ENCODE measurements at regions of chr5 and their contacts with region 1.

Region 1: GRCh38 chr5:171961117-171961516 is 45.3 kb downstream of the FBXW11 start:
- DNase-seq: peak; percentile 65
- H3K4me3 Mint-ChIP-seq: no peak overlapping the region
- H3K27ac Mint-ChIP-seq: peak overlapping the region; percentile 57
- H3K4me1 Mint-ChIP-seq: peaks cover 89% of the 10 kb centered on the region
- H3K27me3 Mint-ChIP-seq: no peaks in the 10 kb centered on the region

Region 2: GRCh38 chr5:171913987-171914273 is 47.2 kb before region 1 on chr5:
- CTCF ChIA-PET with region 1: interaction called, 36 read pairs
- intact Hi-C with region 1: no loop called
- DNase-seq: no peak
- H3K4me3 Mint-ChIP-seq: no peak overlapping the region
- H3K27ac Mint-ChIP-seq: no peak overlapping the region
- H3K4me1 Mint-ChIP-seq: peaks cover 57% of the 10 kb centered on the region
- H3K27me3 Mint-ChIP-seq: no peaks in the 10 kb centered on the region

Region 3: GRCh38 chr5:171984748-171985419 is 23.8 kb after region 1 on chr5:
- CTCF ChIA-PET with region 1: interaction called, 5 read pairs
- intact Hi-C with region 1: loop called (anchors 1 kb)
- DNase-seq: peak; percentile 63
- H3K4me3 Mint-ChIP-seq: no peak overlapping the region
- H3K27ac Mint-ChIP-seq: peak overlapping the region; percentile 50
- H3K4me1 Mint-ChIP-seq: peaks cover 55% of the 10 kb centered on the region
- H3K27me3 Mint-ChIP-seq: no peaks in the 10 kb centered on the region

Region 4: GRCh38 chr5:172065501-172065990 is 104.4 kb after region 1 on chr5:
- CTCF ChIA-PET with region 1: no interaction called
- intact Hi-C with region 1: loop called (anchors 1 kb)
- DNase-seq: no peak
- H3K4me3 Mint-ChIP-seq: no peak overlapping the region
- H3K27ac Mint-ChIP-seq: no peak overlapping the region
- H3K4me1 Mint-ChIP-seq: peaks cover 56% of the 10 kb centered on the region
- H3K27me3 Mint-ChIP-seq: no peaks in the 10 kb centered on the region

Region 5: DNA sequence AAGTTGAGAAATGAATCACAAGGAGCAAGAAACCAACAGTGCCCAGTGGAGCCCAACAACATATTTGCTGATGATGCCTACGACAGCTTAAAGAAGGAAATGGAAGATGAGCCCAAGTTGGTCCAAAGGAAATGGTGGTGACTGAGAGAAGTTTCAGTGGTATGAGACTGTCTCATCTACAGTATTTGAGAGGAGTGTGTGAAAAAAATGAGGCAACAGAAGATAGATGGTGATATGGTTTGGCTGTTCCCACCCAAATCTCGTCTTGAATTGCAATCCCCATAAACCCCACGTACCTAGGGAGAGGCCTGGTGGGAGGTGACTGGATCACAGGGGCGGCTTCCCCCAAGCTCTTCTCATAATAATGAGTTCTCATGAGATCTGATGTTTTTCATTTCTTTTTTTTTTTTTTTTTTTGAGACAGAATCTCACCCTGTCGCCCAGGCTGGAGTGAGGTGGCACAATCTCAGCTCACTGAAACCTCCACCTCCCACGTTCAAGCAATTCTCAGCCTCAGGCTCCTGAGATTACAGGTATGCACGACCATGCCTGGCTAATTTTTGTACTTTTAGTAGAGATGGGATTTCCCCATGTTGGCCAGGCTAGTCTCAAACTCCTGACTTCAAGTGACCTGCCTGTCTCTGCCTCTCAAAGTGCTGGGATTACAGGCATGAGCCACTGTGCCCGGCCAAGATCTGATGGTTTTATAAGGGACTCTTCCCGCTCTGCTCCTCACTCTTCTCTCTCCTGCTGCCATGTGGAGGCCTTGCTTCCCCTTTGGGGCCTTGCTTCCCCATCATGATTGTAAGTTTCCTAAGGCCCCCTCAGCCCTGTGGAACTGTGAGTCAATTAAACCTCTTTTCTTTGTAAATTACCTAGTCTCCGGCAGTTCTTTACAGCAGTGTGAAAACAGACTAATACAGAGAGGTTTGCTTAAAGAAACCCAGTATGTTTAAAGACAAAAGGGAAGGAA is 263.1 kb after region 1 on chr5:
- CTCF ChIA-PET with region 1: no interaction called
- intact Hi-C with region 1: loop called (anchors 1 kb)
- DNase-seq: peak; percentile 70
- H3K4me3 Mint-ChIP-seq: peak overlapping the region; percentile 11
- H3K27ac Mint-ChIP-seq: peak overlapping the region; percentile 37
- H3K4me1 Mint-ChIP-seq: peaks cover 30% of the 10 kb centered on the region
- H3K27me3 Mint-ChIP-seq: no peaks in the 10 kb centered on the region

Region 6: GRCh38 chr5:173187054-173187789 is 1226.1 kb after region 1 on chr5:
- CTCF ChIA-PET with region 1: no interaction called
- intact Hi-C with region 1: no loop called
- DNase-seq: peak; percentile 41
- H3K4me3 Mint-ChIP-seq: no peak overlapping the region
- H3K27ac Mint-ChIP-seq: no peak overlapping the region
- H3K4me1 Mint-ChIP-seq: no peaks in the 10 kb centered on the region
- H3K27me3 Mint-ChIP-seq: no peaks in the 10 kb centered on the region

Measured in activated naive CD4-positive, alpha-beta T cell treated with anti-CD3 and anti-CD28 coated beads for 36 hours (primary cell).